Activated CD4-positive, alpha-beta T cell treated with anti-CD3 and anti-CD28 coated beads, Interleukin-2, amount 10 ng/mL, durations not matched to agents 24 days and 14 days (primary cell): ENCODE measurements at regions of chr19 and their contacts with region 1.

Region 1: GRCh38 chr19:45770192-45771101 is 1.4 kb upstream of the SIX5 start:
- DNase-seq: peak; percentile 97
- H3K4me3 Mint-ChIP-seq: peak overlapping the region; percentile 93
- H3K27ac Mint-ChIP-seq: peak overlapping the region; percentile 56
- H3K4me1 Mint-ChIP-seq: peaks cover 12% of the 10 kb centered on the region
- H3K27me3 Mint-ChIP-seq: peaks cover 20% of the 10 kb centered on the region

Region 2: GRCh38 chr19:45730389-45731288 is 39.8 kb before region 1 on chr19 and contains the start of gene FBXO46:
- intact Hi-C with region 1: loop called (anchors 2 kb)
- DNase-seq: peak; percentile 99
- H3K4me3 Mint-ChIP-seq: peak within 1 kb of the TSS; percentile 95
- H3K27ac Mint-ChIP-seq: peak within 1 kb of the TSS; percentile 88
- H3K4me1 Mint-ChIP-seq: peaks cover 25% of the 10 kb centered on the region
- H3K27me3 Mint-ChIP-seq: no peaks in the 10 kb centered on the region
- total RNA-seq, gene FBXO46: 34.2 and 34.7 TPM in 2 replicates

Region 3: DNA sequence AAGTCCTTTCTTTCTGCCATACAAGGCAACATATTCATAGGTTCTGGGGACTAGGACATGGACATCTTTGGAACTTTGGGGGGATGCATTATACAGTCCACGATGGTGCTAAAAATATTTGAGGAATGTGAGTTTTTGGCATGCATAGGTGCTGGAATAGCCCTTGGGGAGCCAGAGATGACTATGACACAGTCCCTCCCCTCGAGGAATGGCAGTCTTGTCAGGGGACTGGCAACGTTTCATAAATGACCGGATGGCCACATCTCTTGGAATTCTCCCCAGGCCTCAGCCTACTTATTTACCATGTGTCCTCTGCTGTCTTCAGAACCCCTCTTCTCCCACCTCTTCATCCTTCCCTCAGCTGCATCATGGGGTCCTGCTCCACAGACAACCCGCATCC is 23.6 kb before region 1 on chr19:
- intact Hi-C with region 1: no loop called
- DNase-seq: no peak
- H3K4me3 Mint-ChIP-seq: no peak overlapping the region
- H3K27ac Mint-ChIP-seq: no peak overlapping the region
- H3K4me1 Mint-ChIP-seq: no peaks in the 10 kb centered on the region
- H3K27me3 Mint-ChIP-seq: peaks cover 21% of the 10 kb centered on the region

Region 4: GRCh38 chr19:45798995-45799517 is 28.6 kb after region 1 on chr19:
- intact Hi-C with region 1: loop called (anchors 1 kb)
- DNase-seq: peak; percentile 89
- H3K4me3 Mint-ChIP-seq: no peak overlapping the region
- H3K27ac Mint-ChIP-seq: no peak overlapping the region
- H3K4me1 Mint-ChIP-seq: peaks cover 11% of the 10 kb centered on the region
- H3K27me3 Mint-ChIP-seq: peaks cover 62% of the 10 kb centered on the region

Region 5: DNA sequence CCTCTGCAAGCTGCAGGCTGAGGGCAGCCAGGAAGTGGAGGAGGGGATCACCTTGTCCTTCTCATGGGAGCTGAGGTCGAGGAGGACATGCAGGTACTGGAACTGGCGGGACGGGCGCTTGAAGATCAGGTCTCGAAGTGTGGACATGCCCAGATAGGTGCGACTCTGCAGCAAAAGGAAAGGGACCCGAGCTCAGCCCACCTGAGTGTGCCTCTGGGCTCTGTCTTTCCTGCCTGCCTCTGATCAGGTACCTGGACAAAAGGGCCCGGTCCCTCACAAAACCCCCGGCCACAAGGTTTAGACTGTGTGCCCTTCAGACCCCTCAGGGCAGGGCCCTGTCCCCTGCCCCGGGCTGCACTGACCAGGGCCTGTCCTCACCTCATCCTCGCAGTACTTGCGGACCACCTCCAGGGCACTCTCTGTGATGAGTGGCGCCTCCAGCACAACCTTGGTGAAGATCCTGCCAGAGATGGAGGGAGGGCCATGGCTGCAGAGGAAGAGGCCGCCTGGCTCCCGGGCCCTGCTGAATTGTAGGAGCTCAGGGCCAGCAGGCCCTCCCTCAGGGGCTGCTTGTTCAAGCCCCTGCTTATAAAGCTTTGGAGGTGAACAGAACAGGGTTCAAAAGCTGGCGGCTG is 57.1 kb after region 1 on chr19:
- intact Hi-C with region 1: no loop called
- DNase-seq: no peak
- H3K4me3 Mint-ChIP-seq: no peak overlapping the region
- H3K27ac Mint-ChIP-seq: no peak overlapping the region
- H3K4me1 Mint-ChIP-seq: no peaks in the 10 kb centered on the region
- H3K27me3 Mint-ChIP-seq: no peaks in the 10 kb centered on the region